CD8-positive, alpha-beta T cell (primary cell): ENCODE measurements at regions of chr2 and their contacts with region 1.

Region 1: DNA sequence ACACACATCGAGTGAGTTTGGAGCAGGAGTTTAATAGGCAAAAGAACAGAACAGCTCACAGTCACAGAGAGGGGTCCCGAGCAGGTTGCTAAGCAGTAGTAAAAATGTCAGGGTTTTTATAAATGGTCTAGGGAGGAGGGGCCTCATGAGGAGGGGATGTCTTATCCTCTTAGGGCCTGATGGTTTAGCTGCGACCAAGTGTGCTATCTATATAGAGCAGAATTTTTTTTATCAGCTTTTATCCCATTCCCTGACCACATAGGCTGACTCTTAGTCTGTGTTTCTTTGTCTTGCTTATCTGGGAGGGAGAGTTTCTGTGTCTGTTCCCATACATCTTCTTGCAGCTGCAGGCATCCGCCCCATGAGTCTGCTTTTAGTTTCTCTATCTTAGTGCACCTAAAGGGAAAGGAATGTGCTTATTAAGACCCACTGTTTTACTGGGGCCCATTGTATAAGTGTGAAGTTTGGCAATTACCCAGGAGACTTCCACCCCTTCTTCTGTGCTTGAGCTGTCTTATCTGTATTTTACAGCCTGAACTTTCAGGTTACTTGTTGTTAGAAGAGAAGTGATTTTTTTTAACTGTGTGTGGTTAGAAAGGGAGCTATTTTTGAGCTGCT is 30.4 kb upstream of the GMCL1 start:
- DNase-seq: no peak
- ATAC-seq: no peak
- H3K4me3 ChIP-seq: no peak overlapping the region
- H3K4me3 Mint-ChIP-seq: peak overlapping the region; percentile 44
- H3K27ac ChIP-seq: no peak overlapping the region
- H3K27ac Mint-ChIP-seq: no peak overlapping the region
- H3K4me1 ChIP-seq: peaks cover 5% of the 10 kb centered on the region
- H3K4me1 Mint-ChIP-seq: peaks cover 17% of the 10 kb centered on the region
- H3K27me3 ChIP-seq: no peaks in the 10 kb centered on the region
- H3K27me3 Mint-ChIP-seq: no peaks in the 10 kb centered on the region
- CTCF ChIP-seq: no peak

Region 2: DNA sequence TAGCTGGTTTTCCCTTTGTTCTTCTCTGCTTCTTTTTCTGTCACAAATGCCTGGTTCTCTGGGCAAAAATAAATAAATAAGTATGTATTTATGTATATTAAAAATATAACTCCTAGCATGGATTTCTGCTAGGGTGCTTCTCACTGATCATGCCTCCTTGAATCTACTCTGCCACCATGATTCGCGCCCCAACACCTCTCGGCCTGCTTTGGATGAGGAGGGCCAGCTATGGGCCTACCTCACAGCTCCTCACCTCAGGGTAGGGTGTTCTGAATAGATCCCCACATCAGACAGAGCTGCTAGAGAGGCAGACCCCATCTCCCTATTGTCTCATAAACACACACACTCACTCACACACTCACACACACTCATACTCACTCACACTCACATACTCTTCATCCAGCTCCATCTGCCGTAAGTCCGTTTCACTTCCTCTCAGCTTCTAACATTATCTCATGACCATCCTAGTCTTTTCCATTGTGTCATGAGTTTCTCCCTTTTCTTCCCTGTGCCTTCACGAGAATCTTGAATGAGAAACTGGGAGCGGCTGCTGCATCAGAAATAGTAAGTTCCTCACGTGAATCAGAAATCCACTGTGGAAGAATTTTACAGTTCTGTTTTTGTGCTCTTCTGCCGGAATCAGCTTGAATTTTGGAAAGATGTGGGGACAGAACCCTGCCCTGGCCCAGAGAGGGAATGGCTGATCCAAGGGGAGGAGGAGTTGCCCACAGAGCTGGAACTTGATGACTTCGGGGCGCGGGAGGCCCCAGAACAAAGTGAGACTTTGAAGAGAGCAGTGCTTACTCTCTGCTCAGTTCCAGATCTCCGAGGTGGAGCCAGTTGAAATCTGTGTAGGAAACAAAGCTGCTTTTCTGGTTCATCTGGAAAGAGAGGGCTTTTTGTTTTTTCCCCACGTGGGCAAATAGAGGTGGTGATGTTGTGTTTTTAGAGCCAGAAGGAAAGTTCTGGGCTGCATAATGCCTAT is 36.2 kb before region 1 on chr2:
- CTCF ChIA-PET with region 1: no interaction called
- POLR2A ChIA-PET with region 1: no interaction called
- intact Hi-C with region 1: loop called in 1 of 2 experiments (anchors 5 kb)
- DNase-seq: no peak
- ATAC-seq: no peak
- H3K4me3 ChIP-seq: no peak overlapping the region
- H3K4me3 Mint-ChIP-seq: no peak overlapping the region
- H3K27ac ChIP-seq: no peak overlapping the region
- H3K27ac Mint-ChIP-seq: no peak overlapping the region
- H3K4me1 ChIP-seq: no peaks in the 10 kb centered on the region
- H3K4me1 Mint-ChIP-seq: peaks cover 9% of the 10 kb centered on the region
- H3K27me3 ChIP-seq: no peaks in the 10 kb centered on the region
- H3K27me3 Mint-ChIP-seq: no peaks in the 10 kb centered on the region
- CTCF ChIP-seq: no peak